AG04450 (cell line): ENCODE measurements at regions of chr11 and their contacts with region 1.

Region 1: GRCh38 chr11:45102810-45103621 is 43.4 kb upstream of the PRDM11 start:
- DNase-seq: no peak
- H3K4me3 ChIP-seq: peak overlapping the region; percentile 21; the same call in 1 of the 2 replicates
- H3K27ac ChIP-seq: peak overlapping the region; percentile 11
- H3K27me3 ChIP-seq: peaks cover 30% of the 10 kb centered on the region
- CTCF ChIP-seq: peak; percentile 97

Region 2: DNA sequence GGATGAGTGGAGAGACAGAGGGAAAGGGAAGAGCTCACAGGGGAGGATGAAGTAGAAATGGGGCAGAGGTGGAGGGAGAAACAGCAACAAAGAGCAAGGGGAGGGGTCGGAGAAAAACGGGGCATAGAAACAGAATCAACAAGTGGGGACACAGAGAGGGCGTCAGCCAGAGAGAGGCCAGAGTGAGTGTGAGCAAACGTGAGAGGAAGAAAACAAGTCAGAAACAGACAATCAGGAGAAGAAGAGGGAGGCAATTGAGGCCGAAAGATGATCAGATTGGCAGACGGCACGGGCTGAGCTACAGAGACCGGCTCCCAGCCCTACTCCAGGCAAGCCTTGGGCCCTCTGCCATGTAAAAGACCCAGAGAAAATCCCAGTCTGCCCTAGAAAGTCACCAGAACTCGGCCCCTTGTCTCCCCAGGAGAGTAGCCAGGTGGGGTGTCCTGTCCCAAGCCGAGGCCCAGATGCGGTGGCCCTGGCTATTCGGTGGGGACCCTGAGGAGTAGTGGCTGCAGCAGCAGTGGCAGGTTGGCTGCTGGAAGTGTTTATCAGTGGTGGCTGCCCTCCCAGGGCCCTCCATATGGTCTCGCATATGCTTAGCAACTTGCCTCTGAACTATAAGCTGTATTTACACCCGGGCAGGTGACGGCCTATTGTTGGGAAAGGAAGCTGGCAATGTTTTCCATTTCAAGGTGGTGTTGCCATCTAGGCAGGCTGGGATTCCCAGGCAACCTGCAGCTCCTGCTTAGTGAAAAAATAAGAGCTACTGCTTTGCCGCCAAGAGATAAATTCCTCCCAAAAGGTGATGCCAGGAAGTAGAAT is 391.0 kb before region 1 on chr11:
- CTCF ChIA-PET with region 1: no interaction called
- POLR2A ChIA-PET with region 1: no interaction called
- DNase-seq: no peak
- H3K4me3 ChIP-seq: no peak overlapping the region
- H3K27ac ChIP-seq: no peak overlapping the region
- H3K27me3 ChIP-seq: peaks cover 33% of the 10 kb centered on the region
- CTCF ChIP-seq: no peak

Region 3: DNA sequence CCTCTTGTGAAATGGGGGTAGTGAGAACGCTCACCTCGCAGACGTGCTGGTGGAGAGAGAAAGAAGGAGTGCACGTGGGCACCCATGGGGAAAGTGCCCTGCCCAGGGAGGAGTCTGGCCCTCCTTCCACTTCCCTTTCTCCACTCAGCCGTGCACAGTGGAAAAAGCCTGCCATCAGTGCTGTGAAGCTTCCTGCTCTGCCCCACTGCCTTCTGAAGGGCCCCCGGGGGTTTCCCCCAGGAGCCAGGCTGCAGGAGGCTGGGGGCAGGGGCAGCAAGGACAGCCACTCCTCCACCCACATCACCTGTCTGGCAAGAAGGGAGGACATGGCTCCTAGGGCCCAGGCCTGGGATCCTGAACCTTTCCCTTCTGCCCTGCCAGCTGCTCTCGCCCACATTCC is 159.9 kb before region 1 on chr11:
- CTCF ChIA-PET with region 1: interaction called, 713 read pairs
- POLR2A ChIA-PET with region 1: no interaction called
- DNase-seq: no peak
- H3K4me3 ChIP-seq: no peak overlapping the region
- H3K27ac ChIP-seq: no peak overlapping the region
- H3K27me3 ChIP-seq: peaks cover 18% of the 10 kb centered on the region
- CTCF ChIP-seq: no peak

Region 4: GRCh38 chr11:45062971-45063611 is 39.9 kb before region 1 on chr11:
- CTCF ChIA-PET with region 1: interaction called, 12 read pairs
- POLR2A ChIA-PET with region 1: no interaction called
- DNase-seq: no peak
- H3K4me3 ChIP-seq: no peak overlapping the region
- H3K27ac ChIP-seq: no peak overlapping the region
- H3K27me3 ChIP-seq: peaks cover 7% of the 10 kb centered on the region
- CTCF ChIP-seq: no peak